A549 (cell line): ENCODE measurements at regions of chr9 and their contacts with region 1.

Region 1: DNA sequence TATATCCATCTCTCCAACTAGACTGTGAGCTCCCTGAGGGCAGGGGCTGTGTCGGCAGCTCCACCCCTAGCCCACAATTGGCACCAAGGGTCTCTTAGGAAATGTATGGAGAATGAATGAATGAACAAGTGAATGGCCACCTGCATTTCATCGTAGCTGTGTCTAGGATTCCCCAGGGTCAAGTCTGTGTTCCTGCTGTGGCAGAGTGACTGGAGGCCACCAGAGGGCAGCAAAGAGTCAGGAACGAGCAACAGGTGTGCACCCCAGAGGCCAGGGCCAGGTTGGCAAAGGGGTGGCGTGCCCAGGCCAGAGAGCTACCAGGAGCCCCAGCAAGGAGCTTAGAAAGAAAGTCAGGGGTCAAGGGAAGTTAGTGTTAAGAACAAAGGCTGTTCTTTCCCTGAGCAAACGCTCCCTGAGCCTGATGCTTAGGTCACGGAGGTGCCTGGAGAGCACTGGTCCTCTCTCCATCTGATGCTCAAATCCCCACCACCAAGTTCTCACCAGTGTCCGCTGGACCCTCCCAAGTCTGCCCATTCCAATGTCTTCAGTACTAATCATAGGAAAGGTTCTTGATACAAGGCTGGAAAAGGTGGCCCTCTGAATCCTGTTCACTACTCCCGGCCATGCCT is 160.7 kb downstream of the PAX5 start:
- DNase-seq: peak; percentile 73 to 83
- ATAC-seq: peak; percentile 81 to 97
- H3K4me3 ChIP-seq: no peak overlapping the region
- H3K27ac ChIP-seq: no peak overlapping the region
- H3K4me1 ChIP-seq: no peaks in the 10 kb centered on the region
- CTCF ChIP-seq: peak; percentile 90
- EP300 ChIP-seq: no peak
- POLR2A ChIP-seq: no peak
- RAD21 ChIP-seq: peak; percentile 97 to 98

Region 2: DNA sequence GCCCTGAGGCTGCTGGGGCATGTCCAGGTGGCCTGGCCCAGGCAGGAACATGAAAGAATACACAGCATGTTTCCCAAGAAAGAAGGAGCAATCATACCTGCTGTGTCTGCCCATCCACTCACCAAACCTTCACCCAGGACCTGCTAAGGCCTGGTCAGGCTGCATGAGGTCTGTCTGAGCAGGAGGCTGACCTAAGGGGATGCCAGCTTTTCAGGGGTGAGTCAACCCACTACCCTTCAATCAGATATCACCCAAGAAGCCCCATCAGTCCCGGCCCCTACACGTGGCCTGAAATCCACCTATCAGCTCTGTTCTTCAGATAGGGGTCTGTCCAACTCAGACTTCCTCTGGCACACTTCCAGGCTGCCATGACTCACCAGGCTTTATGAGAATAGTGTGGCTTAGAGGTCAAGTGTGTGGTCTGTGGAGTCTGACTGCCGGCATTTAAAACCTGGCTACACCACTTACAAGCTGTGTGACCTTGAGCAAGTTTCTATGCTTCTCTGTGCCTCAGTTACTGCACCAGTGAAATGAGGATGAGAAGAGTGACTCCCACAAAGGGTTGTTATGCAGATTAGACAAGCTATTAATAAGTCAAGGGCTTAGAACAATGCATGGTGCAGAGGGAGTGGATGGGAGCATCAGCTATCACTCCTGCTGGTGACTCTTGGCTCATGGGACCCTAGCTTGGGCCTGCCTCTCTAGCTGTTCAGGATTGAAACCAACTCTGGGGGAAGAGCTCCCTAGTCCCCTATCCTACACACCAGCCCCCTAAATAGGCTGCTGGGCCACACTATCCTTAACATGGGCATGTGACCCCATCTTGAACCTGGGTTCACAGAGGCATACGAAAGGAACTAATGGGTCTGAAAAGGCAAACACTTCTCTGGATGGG is 30.4 kb after region 1 on chr9:
- CTCF ChIA-PET with region 1: interaction called, 38 read pairs
- POLR2A ChIA-PET with region 1: no interaction called
- DNase-seq: peak in 1 of 2 experiments; percentile 66
- ATAC-seq: peak; percentile 42 to 72; a peak in 3 of 6 replicates
- H3K4me3 ChIP-seq: no peak overlapping the region
- H3K27ac ChIP-seq: no peak overlapping the region
- H3K4me1 ChIP-seq: peaks cover 6% of the 10 kb centered on the region; the same call in 2 of the 3 replicates
- CTCF ChIP-seq: no peak
- EP300 ChIP-seq: no peak
- POLR2A ChIP-seq: no peak
- RAD21 ChIP-seq: no peak

Region 3: GRCh38 chr9:36949466-36949865 is 76.1 kb after region 1 on chr9:
- CTCF ChIA-PET with region 1: interaction called, 15 read pairs
- POLR2A ChIA-PET with region 1: no interaction called
- DNase-seq: no peak
- ATAC-seq: no peak
- H3K4me3 ChIP-seq: no peak overlapping the region
- H3K27ac ChIP-seq: no peak overlapping the region
- H3K4me1 ChIP-seq: no peaks in the 10 kb centered on the region
- CTCF ChIP-seq: no peak
- EP300 ChIP-seq: no peak
- POLR2A ChIP-seq: no peak
- RAD21 ChIP-seq: no peak

Region 4: DNA sequence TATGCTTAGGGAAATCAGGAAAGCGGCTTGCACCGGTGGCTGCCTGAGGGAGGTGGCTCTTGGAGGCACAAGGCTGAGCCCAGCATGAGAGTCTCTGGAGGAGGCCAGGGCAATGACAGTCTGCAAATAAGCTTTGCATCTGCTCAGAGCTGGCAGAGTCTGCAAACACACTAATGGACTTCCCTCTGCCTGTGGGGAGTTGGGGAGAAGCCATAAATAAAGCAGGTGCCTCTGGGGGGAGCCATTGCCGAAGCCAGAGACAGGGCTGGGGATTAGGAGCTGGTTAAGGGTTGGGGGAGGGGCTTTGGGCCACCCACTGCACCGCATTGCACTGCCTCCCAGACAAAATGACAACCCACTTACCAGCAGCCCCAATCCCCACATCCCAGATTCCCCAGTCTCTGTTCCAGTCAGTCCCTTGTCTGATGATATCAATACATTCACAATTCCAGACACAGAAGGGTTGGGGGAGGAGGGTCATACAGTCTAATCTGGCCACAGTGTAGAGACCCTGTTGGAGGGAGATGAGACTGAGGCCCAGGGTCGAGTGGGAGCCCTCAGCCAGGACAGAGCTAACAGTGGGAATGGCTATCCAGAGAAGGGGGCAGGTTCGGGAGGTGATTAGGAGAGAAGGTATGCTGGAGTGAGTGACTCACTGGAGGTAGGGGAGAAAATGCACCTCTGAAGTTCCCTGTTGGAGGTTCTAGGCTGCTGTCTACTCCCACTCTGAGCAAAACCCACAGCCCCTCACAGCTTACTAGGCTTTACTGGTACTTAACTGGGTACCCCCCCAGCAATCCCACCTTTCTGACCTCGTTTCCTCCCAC is 107.0 kb after region 1 on chr9:
- CTCF ChIA-PET with region 1: interaction called, 166 read pairs
- POLR2A ChIA-PET with region 1: no interaction called
- DNase-seq: peak; percentile 32 to 35
- ATAC-seq: peak; percentile 53 to 73; a peak in 5 of 6 replicates
- H3K4me3 ChIP-seq: no peak overlapping the region
- H3K27ac ChIP-seq: no peak overlapping the region
- H3K4me1 ChIP-seq: peaks cover 10% of the 10 kb centered on the region; the same call in 1 of the 3 replicates
- CTCF ChIP-seq: peak; percentile 9; the same call in 1 of the 3 replicates
- EP300 ChIP-seq: no peak
- POLR2A ChIP-seq: no peak
- RAD21 ChIP-seq: peak; percentile 19 to 48; a peak in 2 of 5 replicates

Region 5: DNA sequence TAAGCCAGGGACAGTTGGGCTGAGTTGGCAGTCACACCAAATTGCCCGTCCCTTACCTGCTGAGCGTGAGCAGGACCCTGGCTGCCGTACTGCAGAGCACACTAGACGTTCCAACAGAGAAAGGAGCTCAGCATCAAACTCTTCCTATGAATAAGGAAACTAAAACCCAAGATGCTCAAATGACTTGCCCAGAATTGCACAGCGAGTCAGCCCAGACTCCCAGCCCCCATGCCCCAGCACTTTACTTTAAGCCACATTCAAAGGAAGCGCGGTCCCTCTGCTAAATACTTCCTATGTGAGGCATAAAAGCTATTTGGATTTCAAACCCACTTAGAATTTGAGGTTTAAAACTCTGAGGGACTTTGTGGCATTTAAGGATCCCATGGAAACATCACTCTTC is 136.8 kb after region 1 on chr9:
- CTCF ChIA-PET with region 1: interaction called, 15 read pairs
- POLR2A ChIA-PET with region 1: no interaction called
- DNase-seq: no peak
- ATAC-seq: no peak
- H3K4me3 ChIP-seq: no peak overlapping the region
- H3K27ac ChIP-seq: no peak overlapping the region
- H3K4me1 ChIP-seq: no peaks in the 10 kb centered on the region
- CTCF ChIP-seq: no peak
- EP300 ChIP-seq: no peak
- POLR2A ChIP-seq: no peak
- RAD21 ChIP-seq: no peak

Region 6: DNA sequence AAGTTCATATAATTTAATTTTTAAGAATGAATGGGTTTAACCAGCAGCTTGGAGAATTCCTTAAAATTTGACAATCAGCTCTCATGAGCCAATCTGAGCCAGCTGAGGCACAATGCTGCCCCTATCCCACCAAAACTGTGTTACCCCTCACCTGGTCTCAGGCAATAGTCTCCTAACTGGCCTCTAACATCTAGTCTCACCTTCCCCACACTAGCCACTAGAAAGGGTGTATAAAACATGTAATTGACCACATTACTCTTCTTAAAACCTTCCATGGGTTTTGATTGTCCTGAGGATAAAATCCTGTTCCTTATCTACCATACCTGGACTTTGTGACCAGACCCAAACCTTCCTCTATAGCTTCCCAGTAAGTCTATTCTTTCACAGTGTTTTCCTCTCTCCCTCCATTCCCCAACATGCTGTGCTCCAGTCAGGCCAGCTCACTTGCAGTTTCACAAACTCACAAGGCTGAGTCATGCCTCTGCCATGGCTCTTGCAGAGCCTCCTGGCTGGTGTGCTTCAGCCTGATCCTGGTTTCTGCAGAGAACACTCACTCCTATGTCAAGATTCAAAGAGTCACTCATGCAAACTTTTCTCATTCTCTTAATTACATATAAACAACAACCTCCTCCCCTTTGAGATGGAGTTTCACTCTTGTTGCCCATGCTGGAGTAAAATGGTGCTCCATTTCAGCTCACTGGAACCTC is 231.0 kb after region 1 on chr9:
- CTCF ChIA-PET with region 1: no interaction called
- POLR2A ChIA-PET with region 1: no interaction called
- DNase-seq: peak in 1 of 2 experiments; percentile 29
- ATAC-seq: peak; percentile 67 to 73
- H3K4me3 ChIP-seq: no peak overlapping the region
- H3K27ac ChIP-seq: peak overlapping the region in 1 of 2 experiments; percentile 4; a peak in 1 of 6 replicates
- H3K4me1 ChIP-seq: no peaks in the 10 kb centered on the region
- CTCF ChIP-seq: no peak
- EP300 ChIP-seq: no peak
- POLR2A ChIP-seq: no peak
- RAD21 ChIP-seq: no peak

Region 7: DNA sequence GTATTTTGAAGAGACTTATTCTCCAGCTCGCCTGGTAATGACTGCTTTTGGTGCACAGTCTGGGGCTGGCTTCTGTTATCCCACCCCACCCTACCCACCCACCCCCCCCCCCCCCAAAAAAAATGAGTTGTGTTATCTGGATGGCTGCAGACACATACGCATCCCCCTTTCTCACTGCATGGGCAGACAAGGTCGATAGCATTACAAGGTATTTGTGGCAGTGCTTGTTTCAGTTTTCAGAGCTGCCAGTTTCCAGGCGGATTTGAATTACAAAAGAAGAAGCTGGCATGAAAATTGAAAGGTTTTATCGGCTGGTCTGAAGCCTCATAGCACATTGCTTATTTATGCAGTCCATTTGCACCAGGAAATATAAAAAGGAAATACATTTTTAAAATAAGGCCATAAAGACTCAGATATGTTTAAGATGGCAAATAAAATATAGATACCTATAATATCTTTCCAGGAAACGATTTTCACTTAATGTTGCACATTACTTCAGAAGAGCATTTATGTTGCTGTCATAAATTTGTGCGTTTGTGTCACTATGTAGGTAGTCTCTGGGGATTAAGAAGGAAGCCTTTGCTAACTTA is 464.0 kb after region 1 on chr9:
- CTCF ChIA-PET with region 1: interaction called, 11 read pairs
- POLR2A ChIA-PET with region 1: no interaction called
- DNase-seq: no peak
- ATAC-seq: no peak
- H3K4me3 ChIP-seq: no peak overlapping the region
- H3K27ac ChIP-seq: no peak overlapping the region
- H3K4me1 ChIP-seq: no peaks in the 10 kb centered on the region
- CTCF ChIP-seq: no peak
- EP300 ChIP-seq: no peak
- POLR2A ChIP-seq: no peak
- RAD21 ChIP-seq: no peak